ENCODE measurements at regions of chr2 and their contacts with region 1.

Region 1: GRCh38 chr2:241149925-241150659 is at the start of gene PPP1R7:
- DNase-seq: peak; percentile 88 to 98 (median 94)
- ATAC-seq: peak; percentile 80
- H3K4me3 ChIP-seq: peak within 1 kb of the TSS; percentile 93
- H3K4me3 Mint-ChIP-seq: peak within 1 kb of the TSS; percentile 97
- H3K27ac ChIP-seq: peak within 1 kb of the TSS; percentile 53 to 65
- H3K27ac Mint-ChIP-seq: peak within 1 kb of the TSS; percentile 89
- H3K4me1 ChIP-seq: peaks cover 36% of the 10 kb centered on the region
- H3K4me1 Mint-ChIP-seq: peaks cover 43% of the 10 kb centered on the region
- H3K27me3 ChIP-seq: no peaks in the 10 kb centered on the region
- H3K27me3 Mint-ChIP-seq: no peaks in the 10 kb centered on the region
- CTCF ChIP-seq: peak; percentile 61
- total RNA-seq, gene PPP1R7: 36.4 to 38.2 TPM

Region 2: GRCh38 chr2:240586198-240586918 is 563.7 kb before region 1 on chr2 and contains the start of gene CAPN10:
- CTCF ChIA-PET with region 1: no interaction called
- POLR2A ChIA-PET with region 1: interaction called, 3 read pairs
- intact Hi-C with region 1: loop called in 1 of 2 experiments (anchors 5 kb)
- DNase-seq: peak; percentile 92 to 98 (median 95)
- ATAC-seq: peak; percentile 83
- H3K4me3 ChIP-seq: peak within 1 kb of the TSS; percentile 65
- H3K4me3 Mint-ChIP-seq: peak within 1 kb of the TSS; percentile 97
- H3K27ac ChIP-seq: peak within 1 kb of the TSS; percentile 90 to 97
- H3K27ac Mint-ChIP-seq: peak within 1 kb of the TSS; percentile 90
- H3K4me1 ChIP-seq: peaks cover 52% of the 10 kb centered on the region
- H3K4me1 Mint-ChIP-seq: peaks cover 50% of the 10 kb centered on the region
- H3K27me3 ChIP-seq: no peaks in the 10 kb centered on the region
- H3K27me3 Mint-ChIP-seq: no peaks in the 10 kb centered on the region
- CTCF ChIP-seq: no peak
- total RNA-seq, gene CAPN10: 40.6 to 42.1 TPM

Region 3: DNA sequence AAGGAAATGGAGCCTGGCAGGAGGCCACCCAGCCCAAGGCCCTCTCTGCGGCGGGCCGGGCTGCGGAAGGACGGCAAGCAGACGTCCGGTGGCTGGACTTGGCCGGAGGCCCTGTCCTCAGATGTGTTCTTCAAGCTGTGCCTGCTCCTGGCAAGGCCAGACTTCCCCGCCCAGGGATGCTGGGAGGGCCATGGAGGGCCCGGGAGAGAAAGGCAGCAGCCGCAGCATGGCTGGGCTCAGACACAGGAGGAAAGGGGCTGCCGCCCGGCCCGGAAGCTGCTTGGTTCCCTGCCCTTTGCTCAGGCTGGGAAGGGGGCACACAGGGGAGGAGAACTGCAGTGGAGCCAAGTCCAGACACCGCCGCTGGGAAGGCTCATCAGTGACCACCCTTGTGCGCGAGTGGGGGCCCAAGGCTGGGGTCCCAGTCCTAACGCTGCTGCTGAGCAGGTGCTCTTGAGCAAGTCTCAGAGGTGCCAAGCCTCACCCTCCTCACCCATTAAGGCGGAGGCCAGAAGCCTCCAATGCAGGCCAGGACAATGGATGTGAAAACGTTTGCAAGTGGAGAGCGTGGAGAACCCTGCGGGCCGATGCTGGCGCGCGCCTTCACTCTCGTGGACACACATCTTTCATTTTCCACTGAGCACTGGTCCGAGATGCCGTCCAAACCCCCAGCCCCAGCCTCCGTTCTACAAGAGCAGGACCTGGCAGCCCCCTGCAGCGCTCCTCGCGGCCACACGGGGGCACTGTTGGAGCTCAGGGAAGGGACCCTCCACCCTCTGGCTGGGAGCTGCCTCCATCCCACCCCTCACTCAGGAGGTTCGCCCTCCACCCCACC is 236.1 kb before region 1 on chr2:
- CTCF ChIA-PET with region 1: interaction called, 8 read pairs
- POLR2A ChIA-PET with region 1: interaction called, 3 read pairs
- intact Hi-C with region 1: loop called (anchors 2 to 10 kb)
- DNase-seq: peak; percentile 49 to 74 (median 62)
- ATAC-seq: peak; percentile 79
- H3K4me3 ChIP-seq: no peak overlapping the region
- H3K4me3 Mint-ChIP-seq: no peak overlapping the region
- H3K27ac ChIP-seq: no peak overlapping the region
- H3K27ac Mint-ChIP-seq: no peak overlapping the region
- H3K4me1 ChIP-seq: peaks cover 3% of the 10 kb centered on the region
- H3K4me1 Mint-ChIP-seq: no peaks in the 10 kb centered on the region
- H3K27me3 ChIP-seq: peaks cover 29 to 31% of the 10 kb centered on the region in 2 experiments
- H3K27me3 Mint-ChIP-seq: peaks cover 25% of the 10 kb centered on the region
- CTCF ChIP-seq: peak; percentile 87

Region 4: DNA sequence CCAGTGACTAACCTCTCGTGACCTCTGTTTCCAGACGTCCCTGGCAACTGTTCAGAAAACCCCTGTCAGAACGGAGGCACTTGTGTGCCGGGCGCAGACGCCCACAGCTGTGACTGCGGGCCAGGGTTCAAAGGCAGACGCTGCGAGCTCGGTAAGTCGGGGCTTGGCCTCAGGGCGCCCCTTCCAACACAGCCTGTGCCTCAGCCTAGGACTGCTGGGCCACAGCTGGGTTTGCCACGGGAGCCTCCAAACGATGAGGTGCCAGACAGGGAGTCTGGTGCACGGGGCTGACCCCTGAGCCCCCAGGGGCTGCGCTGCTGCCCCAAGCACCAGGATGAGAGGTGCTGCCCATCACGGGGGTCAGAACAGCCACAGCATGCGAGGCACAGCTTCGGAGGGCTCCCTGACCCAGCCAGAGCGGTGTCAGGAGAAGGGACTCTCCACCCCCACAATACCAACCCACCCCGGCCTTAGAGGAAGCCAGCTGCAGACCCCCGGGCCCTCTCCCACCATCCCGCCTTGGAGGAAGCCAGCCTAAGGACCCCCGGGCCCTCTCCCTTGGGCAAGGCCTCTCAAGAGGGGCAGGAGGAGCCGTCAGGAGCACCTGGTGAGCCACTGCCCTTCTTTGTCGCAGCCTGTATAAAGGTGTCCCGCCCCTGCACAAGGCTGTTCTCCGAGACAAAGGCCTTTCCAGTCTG is 68.3 kb before region 1 on chr2:
- CTCF ChIA-PET with region 1: interaction called, 66 read pairs
- POLR2A ChIA-PET with region 1: interaction called, 28 read pairs
- intact Hi-C with region 1: loop called (anchors 1 kb)
- DNase-seq: peak in 1 of 14 experiments; percentile 24
- ATAC-seq: no peak
- H3K4me3 ChIP-seq: no peak overlapping the region
- H3K4me3 Mint-ChIP-seq: no peak overlapping the region
- H3K27ac ChIP-seq: no peak overlapping the region
- H3K27ac Mint-ChIP-seq: peak overlapping the region; percentile 52
- H3K4me1 ChIP-seq: peaks cover 11% of the 10 kb centered on the region
- H3K4me1 Mint-ChIP-seq: peaks cover 6% of the 10 kb centered on the region
- H3K27me3 ChIP-seq: no peaks in the 10 kb centered on the region
- H3K27me3 Mint-ChIP-seq: no peaks in the 10 kb centered on the region
- CTCF ChIP-seq: no peak

Region 5: GRCh38 chr2:241110607-241111439 is 39.3 kb before region 1 on chr2:
- CTCF ChIA-PET with region 1: interaction called, 5 read pairs
- POLR2A ChIA-PET with region 1: interaction called, 40 read pairs
- intact Hi-C with region 1: no loop called
- DNase-seq: peak in 2 of 14 experiments; percentile 36 to 42
- ATAC-seq: no peak
- H3K4me3 ChIP-seq: peak overlapping the region; percentile 68
- H3K4me3 Mint-ChIP-seq: peak overlapping the region; percentile 91
- H3K27ac ChIP-seq: peak overlapping the region; percentile 90 to 92
- H3K27ac Mint-ChIP-seq: peak overlapping the region; percentile 95
- H3K4me1 ChIP-seq: peaks cover 65% of the 10 kb centered on the region
- H3K4me1 Mint-ChIP-seq: peaks cover 61% of the 10 kb centered on the region
- H3K27me3 ChIP-seq: no peaks in the 10 kb centered on the region
- H3K27me3 Mint-ChIP-seq: no peaks in the 10 kb centered on the region
- CTCF ChIP-seq: no peak

Region 6: DNA sequence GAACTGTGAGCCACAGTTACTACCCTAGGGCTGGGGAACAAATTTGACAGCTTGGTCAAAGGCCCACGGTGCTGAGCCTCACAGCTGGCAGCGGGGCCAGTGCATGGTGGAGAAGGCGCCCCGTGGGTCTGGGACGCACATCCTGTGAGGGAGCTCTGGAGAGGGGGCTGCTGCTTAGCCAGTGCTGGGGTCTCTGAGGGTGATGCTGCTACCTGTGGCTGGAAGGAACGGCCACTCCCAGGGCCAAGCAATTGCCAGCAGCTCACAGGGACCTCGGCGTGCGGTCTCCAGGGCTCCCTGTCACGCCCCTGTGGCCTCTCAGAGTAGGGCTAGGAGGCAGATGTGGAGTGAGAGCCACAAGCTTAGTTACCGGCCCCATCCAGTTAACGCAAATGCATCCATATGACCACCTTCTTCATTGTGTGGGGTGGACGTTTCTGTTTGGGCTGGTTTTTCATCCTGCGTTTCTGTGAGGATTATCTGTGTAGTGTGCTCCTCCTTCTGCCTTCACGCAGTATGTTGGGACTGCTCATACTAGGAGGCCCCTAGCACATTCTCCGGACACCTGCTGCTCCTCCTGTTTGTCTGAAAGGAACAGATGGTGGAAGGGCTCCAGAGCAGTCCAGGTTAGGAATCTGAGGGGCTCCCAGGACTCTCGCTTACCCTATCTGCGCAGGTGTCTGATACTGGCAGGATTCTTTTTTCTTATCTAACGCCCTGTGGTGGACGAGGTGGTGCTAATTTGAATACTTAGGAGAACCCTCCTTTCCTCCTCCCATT is 332.3 kb after region 1 on chr2:
- CTCF ChIA-PET with region 1: no interaction called
- POLR2A ChIA-PET with region 1: no interaction called
- intact Hi-C with region 1: no loop called
- DNase-seq: no peak
- ATAC-seq: no peak
- H3K4me3 ChIP-seq: no peak overlapping the region
- H3K4me3 Mint-ChIP-seq: no peak overlapping the region
- H3K27ac ChIP-seq: no peak overlapping the region
- H3K27ac Mint-ChIP-seq: no peak overlapping the region
- H3K4me1 ChIP-seq: no peaks in the 10 kb centered on the region
- H3K4me1 Mint-ChIP-seq: no peaks in the 10 kb centered on the region
- H3K27me3 ChIP-seq: no peaks in the 10 kb centered on the region
- H3K27me3 Mint-ChIP-seq: peaks cover 3% of the 10 kb centered on the region
- CTCF ChIP-seq: no peak

Region 7: DNA sequence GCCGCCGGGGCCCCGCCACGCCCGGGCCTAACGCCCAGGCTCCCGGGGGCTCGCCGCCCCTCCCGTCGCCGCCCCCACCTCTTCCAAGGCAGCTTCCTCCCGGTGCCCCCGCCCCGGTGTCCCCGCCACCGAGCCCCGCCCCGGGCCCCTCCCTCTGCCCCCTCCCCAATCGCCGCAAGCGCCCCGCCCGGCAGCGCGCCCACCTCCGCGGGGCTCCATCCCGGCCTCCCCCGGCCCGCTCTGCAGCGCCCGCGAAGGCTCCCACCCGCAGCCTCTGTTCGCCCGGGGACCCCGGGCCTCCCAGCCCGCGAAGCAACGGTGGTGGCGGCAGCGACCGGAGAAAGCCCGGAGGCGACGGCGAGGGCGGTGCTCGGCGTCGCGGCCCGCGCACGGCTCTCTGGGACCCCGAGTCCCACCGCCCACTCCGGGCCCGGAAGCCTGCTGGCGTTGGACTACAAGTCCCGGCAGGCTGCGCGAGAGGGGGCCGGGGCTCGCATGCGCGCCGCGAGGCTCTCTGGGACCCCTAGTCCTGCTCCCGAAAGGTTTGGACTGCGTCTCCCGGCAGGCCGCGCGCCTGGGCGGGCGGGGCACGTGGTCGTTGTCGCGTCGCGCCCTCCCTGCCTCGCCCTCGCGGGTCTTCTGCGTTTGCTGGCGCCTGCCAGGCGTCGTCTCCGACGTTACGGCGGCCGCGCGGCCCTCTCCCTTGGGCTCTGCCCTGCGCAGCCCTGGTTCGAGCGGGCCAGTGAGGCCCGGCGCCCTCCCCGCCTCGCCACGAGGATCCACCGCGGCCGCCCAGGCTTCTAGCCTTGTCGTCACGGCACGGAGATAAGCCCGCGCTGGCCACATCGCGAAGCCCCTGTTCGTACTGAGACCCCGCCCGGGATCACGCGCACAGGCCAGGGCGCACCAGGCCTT is 358.4 kb after region 1 on chr2 and contains the start of gene STK25:
- CTCF ChIA-PET with region 1: no interaction called
- POLR2A ChIA-PET with region 1: no interaction called
- intact Hi-C with region 1: loop called in 1 of 2 experiments (anchors 5 kb)
- DNase-seq: peak; percentile 94 to 99 (median 98)
- ATAC-seq: peak; percentile 95
- H3K4me3 ChIP-seq: peak within 1 kb of the TSS; percentile 63
- H3K4me3 Mint-ChIP-seq: peak within 1 kb of the TSS; percentile 94
- H3K27ac ChIP-seq: peak within 1 kb of the TSS; percentile 18 to 77
- H3K27ac Mint-ChIP-seq: peak within 1 kb of the TSS; percentile 78
- H3K4me1 ChIP-seq: peaks cover 30% of the 10 kb centered on the region
- H3K4me1 Mint-ChIP-seq: peaks cover 15% of the 10 kb centered on the region
- H3K27me3 ChIP-seq: no peaks in the 10 kb centered on the region
- H3K27me3 Mint-ChIP-seq: no peaks in the 10 kb centered on the region
- CTCF ChIP-seq: no peak
- total RNA-seq, gene STK25: 76.1 to 81.3 TPM

Measured in CD4-positive, alpha-beta T cell (primary cell).